HepG2 (cell line): ENCODE measurements at regions of chr20 and their contacts with region 1.

Region 1: DNA sequence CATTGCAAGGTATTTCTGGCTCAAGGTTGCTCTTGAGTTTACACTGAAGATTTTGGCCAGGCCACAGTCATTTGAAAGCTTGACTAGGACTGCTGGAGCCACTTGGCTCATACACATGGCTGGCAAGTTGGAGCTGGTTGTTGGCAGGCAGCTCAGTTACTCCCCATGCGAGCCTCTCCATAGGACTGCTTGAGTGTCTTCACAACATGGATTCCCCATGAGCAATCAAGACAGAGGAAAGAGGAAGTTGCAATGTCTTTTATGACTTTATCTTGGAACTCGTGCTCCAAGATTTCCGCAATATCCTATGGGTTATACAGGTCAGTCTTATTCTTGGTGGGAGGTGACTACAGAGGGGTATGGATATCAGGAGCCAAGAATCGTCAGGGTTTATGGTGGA is 1.4 kb upstream of the MANBAL start:
- DNase-seq: no peak
- ATAC-seq: no peak
- H3K4me3 ChIP-seq: no peak overlapping the region
- H3K27ac ChIP-seq: no peak overlapping the region
- H3K4me1 ChIP-seq: peaks cover 73% of the 10 kb centered on the region
- H3K27me3 ChIP-seq: no peaks in the 10 kb centered on the region; a peak in 1 of 5 replicates
- CTCF ChIP-seq: no peak
- EP300 ChIP-seq: no peak
- POLR2A ChIP-seq: no peak
- RAD21 ChIP-seq: no peak

Region 2: DNA sequence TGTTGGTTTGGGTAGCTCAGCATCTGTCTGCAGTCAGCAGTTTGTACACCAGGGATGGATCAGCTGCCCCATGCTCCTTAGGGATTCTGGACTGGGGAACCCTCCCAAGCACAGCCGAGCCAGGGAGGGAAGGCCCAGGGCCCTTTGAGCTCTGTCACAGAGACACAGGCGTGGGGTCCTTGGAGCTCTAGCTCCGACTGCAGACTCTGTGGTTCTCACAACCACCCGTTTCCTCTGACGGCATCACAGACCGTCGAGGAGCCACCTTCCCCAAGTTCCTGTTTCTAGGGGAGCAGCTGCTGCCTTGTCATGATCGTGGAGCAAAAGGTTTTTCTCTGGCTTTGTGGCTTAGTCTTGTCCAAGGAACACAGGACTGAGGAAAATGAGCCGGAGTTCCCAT is 642.1 kb before region 1 on chr20 and contains the start of gene SLA2:
- CTCF ChIA-PET with region 1: no interaction called
- POLR2A ChIA-PET with region 1: no interaction called
- in situ Hi-C with region 1: no loop called
- intact Hi-C with region 1: no loop called
- DNase-seq: no peak
- ATAC-seq: no peak
- H3K4me3 ChIP-seq: no peak within 1 kb of the TSS
- H3K27ac ChIP-seq: peak within 1 kb of the TSS; percentile 59
- H3K4me1 ChIP-seq: peaks cover 82% of the 10 kb centered on the region
- H3K27me3 ChIP-seq: no peaks in the 10 kb centered on the region
- CTCF ChIP-seq: no peak
- EP300 ChIP-seq: no peak
- POLR2A ChIP-seq: no peak
- RAD21 ChIP-seq: no peak
- total RNA-seq, gene SLA2: 1.6 and 1.8 TPM in 2 replicates

Region 3: GRCh38 chr20:37209661-37210314 is 78.3 kb before region 1 on chr20:
- CTCF ChIA-PET with region 1: no interaction called
- POLR2A ChIA-PET with region 1: no interaction called
- in situ Hi-C with region 1: no loop called
- intact Hi-C with region 1: no loop called
- DNase-seq: no peak
- ATAC-seq: no peak
- H3K4me3 ChIP-seq: no peak overlapping the region
- H3K27ac ChIP-seq: no peak overlapping the region
- H3K4me1 ChIP-seq: no peaks in the 10 kb centered on the region
- H3K27me3 ChIP-seq: no peaks in the 10 kb centered on the region
- CTCF ChIP-seq: no peak
- EP300 ChIP-seq: no peak
- POLR2A ChIP-seq: no peak
- RAD21 ChIP-seq: no peak

Region 4: DNA sequence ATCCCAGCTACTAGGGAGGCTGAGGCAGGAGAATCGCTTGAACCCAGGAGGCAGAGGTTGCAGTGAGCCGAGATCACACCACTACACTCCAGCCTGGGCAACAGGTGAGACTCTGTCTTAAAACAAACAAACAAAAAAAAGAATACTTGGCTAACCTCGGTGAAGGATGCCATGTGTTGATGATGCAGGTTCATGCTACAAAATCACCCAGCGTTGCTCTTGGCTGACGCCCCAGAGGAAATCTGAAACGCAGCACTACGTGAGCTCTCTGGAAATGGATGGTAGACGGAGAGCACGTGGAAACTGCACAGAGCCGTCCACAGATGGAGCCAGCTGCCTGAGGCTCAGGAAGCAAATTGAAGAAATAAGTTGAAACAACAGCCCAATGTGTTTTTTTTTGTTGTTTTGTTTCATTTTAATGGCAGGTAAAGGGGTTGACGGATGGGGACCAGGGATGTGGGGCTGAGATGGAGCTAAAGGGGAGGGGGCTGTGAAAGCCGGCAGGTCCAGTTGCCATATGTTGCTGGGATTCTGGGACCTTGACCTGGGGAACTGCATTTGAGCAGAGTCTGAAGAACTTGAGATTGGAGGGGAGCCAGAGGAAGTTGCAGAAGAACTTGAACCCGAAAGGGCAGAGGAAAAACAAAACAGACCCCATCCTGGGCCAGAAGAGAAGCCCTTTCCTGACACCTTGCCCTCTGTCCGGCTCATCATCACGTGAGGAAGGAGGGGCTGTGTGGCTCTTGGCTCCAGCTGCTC is 11.4 kb before region 1 on chr20:
- CTCF ChIA-PET with region 1: no interaction called
- POLR2A ChIA-PET with region 1: interaction called, 35 read pairs
- in situ Hi-C with region 1: no loop called
- intact Hi-C with region 1: loop called (anchors 1 kb)
- DNase-seq: peak; percentile 49
- ATAC-seq: peak; percentile 76
- H3K4me3 ChIP-seq: peak overlapping the region in 1 of 3 experiments; percentile 43; a peak in 2 of 6 replicates
- H3K27ac ChIP-seq: no peak overlapping the region
- H3K4me1 ChIP-seq: peaks cover 65% of the 10 kb centered on the region
- H3K27me3 ChIP-seq: no peaks in the 10 kb centered on the region; a peak in 2 of 5 replicates
- CTCF ChIP-seq: peak; percentile 77
- EP300 ChIP-seq: 0 out of 4 replicates have a peak, but pooled peaks of 1 of the 2 experiments have one; percentile 1
- POLR2A ChIP-seq: no peak
- RAD21 ChIP-seq: peak; percentile 34; the same call in 1 of the 2 replicates

Region 5: GRCh38 chr20:37298190-37298939 is 10.3 kb after region 1 on chr20:
- CTCF ChIA-PET with region 1: no interaction called
- POLR2A ChIA-PET with region 1: interaction called, 27 read pairs
- in situ Hi-C with region 1: no loop called
- intact Hi-C with region 1: no loop called
- DNase-seq: no peak
- ATAC-seq: no peak
- H3K4me3 ChIP-seq: no peak overlapping the region
- H3K27ac ChIP-seq: no peak overlapping the region
- H3K4me1 ChIP-seq: peaks cover 27% of the 10 kb centered on the region
- H3K27me3 ChIP-seq: no peaks in the 10 kb centered on the region
- CTCF ChIP-seq: no peak
- EP300 ChIP-seq: no peak
- POLR2A ChIP-seq: no peak
- RAD21 ChIP-seq: no peak

Region 6: DNA sequence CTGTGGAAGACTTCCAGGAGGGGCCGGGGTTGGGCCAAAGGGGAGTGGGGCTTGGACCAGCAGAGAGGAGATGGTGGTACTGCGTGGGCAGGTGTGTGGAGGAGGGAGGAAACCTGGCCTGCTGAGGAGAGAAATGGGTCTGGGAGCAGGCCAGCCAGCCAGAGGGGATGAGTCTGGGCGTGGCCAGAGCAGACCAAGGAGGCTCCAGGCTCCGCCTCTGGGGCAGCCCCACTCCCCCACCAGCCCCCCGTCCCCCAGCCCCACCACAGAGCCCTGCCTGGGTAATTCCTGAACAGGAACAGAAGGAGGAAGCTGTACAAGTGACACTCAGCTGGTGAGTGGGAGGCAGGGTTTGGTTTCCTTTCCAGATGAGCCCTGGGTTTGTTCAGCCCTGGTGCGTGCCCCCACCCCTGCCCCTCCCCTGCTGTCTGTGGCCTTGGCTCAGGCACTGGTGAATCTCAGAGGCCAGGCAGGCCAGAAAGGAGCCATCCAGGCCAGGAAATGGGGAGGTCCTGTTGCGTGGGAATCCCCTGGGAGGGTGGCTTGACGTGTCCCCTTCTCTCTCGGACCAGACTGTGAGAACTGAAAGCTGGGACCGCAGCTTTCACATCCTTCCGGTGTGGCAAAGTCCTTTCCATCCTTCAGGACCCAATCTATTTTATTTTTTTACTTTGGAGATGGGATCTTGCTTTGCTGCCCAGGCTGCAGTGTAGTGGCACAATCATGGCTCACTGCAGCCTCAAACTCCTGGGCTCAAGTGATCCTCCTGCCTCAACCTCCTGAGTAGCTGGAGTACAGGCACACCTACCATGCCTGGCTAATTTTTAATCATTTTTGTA is 48.5 kb after region 1 on chr20:
- CTCF ChIA-PET with region 1: no interaction called
- POLR2A ChIA-PET with region 1: interaction called, 29 read pairs
- in situ Hi-C with region 1: no loop called
- intact Hi-C with region 1: loop called (anchors 2 kb)
- DNase-seq: no peak
- ATAC-seq: peak; percentile 23
- H3K4me3 ChIP-seq: peak overlapping the region; percentile 42 to 70 (median 53)
- H3K27ac ChIP-seq: peak overlapping the region; percentile 49
- H3K4me1 ChIP-seq: peaks cover 98% of the 10 kb centered on the region
- H3K27me3 ChIP-seq: no peaks in the 10 kb centered on the region
- CTCF ChIP-seq: peak; percentile 2; the same call in 1 of the 2 replicates
- EP300 ChIP-seq: no peak
- POLR2A ChIP-seq: no peak; a peak in 1 of 4 replicates
- RAD21 ChIP-seq: no peak

Region 7: DNA sequence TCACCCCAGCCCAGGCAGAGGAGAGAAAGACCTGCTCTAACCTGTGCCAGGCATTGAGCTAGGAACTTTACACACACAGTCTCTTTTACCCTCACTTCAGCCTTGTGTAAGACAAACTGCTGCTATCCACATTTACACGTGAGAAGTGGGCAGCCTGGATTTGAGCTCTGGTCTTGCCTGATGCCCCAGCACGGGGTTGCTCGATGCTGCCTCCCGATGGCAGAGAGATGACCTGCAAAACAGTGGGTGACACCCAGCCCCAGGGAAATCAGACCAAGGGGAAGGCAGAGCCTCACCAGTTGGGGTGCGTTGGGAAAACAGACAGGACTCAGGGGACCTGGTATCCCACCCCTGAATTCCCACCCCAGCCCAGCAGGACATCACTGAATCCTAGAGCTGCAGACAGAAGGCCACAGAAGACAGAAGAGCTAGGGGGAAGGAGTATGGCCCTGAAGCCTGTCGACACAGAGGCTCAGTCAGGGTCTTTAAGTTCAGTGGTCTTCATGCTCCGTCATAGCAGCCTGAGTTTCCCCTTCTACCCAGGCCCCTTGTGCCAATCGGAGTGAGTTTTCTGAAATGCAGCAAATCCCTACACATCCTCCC is 1016.9 kb after region 1 on chr20:
- CTCF ChIA-PET with region 1: no interaction called
- POLR2A ChIA-PET with region 1: no interaction called
- in situ Hi-C with region 1: no loop called
- intact Hi-C with region 1: no loop called
- DNase-seq: peak; percentile 31
- ATAC-seq: peak; percentile 83
- H3K4me3 ChIP-seq: no peak overlapping the region
- H3K27ac ChIP-seq: no peak overlapping the region
- H3K4me1 ChIP-seq: no peaks in the 10 kb centered on the region
- H3K27me3 ChIP-seq: peaks cover 0 to 28% of the 10 kb centered on the region in 2 experiments; a peak in 3 of 5 replicates
- CTCF ChIP-seq: peak; percentile 68
- EP300 ChIP-seq: no peak
- POLR2A ChIP-seq: no peak
- RAD21 ChIP-seq: 0 out of 2 replicates have a peak, but pooled peaks have one; percentile 16